Activated T-helper 2 cell treated with anti-CD3 and anti-CD28 coated beads, Interferon-gamma antibody, Interleukin-2, Interleukin-4, amounts not matched to agents 10 μg/mL and 5 μg/mL and 100 μg/mL, durations not matched to agents 14 hours and 24 hours and 36 hours (primary cell): ENCODE measurements at regions of chr19 and their contacts with region 1.

Region 1: DNA sequence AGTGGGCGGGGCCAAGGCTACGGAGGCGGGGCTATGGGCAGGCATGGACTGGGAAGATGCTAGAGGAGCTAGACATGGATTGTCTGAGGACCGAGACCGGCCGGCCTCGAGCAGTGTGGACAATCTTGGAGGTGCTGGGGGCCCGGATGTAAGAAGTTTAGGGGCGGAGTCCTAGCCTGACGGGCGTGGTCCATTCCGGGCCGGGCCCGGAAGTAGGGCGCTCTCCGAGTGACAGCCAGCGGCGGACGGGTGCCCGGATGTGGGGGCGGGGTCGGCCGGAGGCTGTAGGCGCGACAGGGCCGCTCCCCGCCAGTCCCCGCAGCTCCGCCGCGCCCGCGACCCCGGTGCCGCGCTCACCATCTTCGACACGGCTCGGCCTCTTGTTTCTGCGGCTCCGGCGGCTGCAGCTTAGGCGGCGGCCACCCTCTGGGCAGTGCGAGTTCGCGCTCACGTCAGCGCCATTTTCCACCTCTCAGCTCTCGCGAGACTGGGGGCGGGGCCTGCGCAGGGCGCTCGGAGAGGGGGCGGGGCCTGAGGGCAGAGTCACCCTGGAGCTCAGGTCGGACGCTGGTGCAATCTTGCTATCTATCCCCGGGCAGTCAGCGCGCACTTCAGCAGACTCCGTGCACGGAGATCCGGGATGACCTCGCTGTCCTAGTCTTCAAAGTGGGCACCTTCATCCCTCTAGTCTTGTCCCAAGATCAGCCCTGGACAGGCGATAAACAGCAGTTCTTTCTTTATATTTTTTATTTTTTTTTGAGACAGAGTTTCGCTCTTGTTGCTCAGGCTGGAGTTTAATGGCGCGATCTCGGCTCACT is at the start of gene ZNF414:
- DNase-seq: peak; percentile 94
- H3K4me3 Mint-ChIP-seq: peak within 1 kb of the TSS; percentile 93
- H3K27ac Mint-ChIP-seq: peak within 1 kb of the TSS; percentile 99
- H3K4me1 Mint-ChIP-seq: peaks cover 39% of the 10 kb centered on the region
- H3K27me3 Mint-ChIP-seq: no peaks in the 10 kb centered on the region
- total RNA-seq, gene ZNF414: 22.5 and 23.6 TPM in 2 replicates

Region 2: DNA sequence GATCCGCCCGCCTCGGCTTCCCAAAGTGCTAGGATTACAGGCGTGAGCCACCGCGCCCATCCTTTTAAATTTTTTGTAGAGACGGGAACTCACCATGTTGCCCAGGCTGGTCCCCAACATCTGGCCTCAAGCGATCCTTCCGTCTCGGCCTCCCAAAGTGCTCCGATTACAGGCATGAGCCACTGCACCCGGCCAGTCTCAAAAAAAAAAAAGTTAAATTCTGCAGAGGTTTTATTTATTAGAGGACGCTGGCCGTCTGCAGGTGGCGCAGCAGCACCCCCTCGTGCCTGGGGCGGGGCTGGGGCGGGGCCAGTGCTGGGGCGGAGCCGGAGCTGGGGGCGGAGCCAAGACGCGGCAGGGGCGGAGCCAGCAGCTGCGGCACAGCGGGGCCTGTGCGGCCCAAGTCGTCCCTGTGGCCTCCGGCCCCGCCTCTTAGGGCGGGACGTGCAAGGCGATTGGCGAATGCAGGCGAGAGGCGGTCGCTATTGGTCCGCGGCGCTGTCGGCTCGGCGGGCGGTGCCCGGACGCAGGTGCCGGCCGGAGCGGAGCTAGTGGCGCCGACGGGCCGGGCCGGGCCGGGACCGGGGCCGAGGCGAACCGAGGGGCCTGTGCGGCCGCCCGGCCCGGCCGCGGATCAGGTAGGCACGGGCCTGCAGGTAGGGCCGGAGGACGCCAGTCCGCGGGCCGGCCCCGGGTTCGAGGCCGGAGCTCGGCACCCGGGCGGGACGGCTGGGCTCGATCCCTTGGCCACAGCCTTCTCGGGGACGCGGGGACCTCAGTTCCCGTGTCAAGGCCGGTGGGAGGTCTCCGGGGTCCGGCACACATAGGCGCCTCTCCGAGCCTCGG is 100.9 kb before region 1 on chr19 and contains the start of gene MARCHF2:
- intact Hi-C with region 1: loop called (anchors 10 kb)
- DNase-seq: peak; percentile 94
- H3K4me3 Mint-ChIP-seq: peak within 1 kb of the TSS; percentile 65
- H3K27ac Mint-ChIP-seq: no peak within 1 kb of the TSS
- H3K4me1 Mint-ChIP-seq: peaks cover 7% of the 10 kb centered on the region
- H3K27me3 Mint-ChIP-seq: no peaks in the 10 kb centered on the region
- total RNA-seq, gene MARCHF2: 10.2 and 13.0 TPM in 2 replicates

Region 3: GRCh38 chr19:8444645-8445487 is 69.0 kb before region 1 on chr19 and contains the start of gene HNRNPM:
- intact Hi-C with region 1: loop called (anchors 5 kb)
- DNase-seq: peak; percentile 100
- H3K4me3 Mint-ChIP-seq: peak within 1 kb of the TSS; percentile 98
- H3K27ac Mint-ChIP-seq: peak within 1 kb of the TSS; percentile 98
- H3K4me1 Mint-ChIP-seq: peaks cover 32% of the 10 kb centered on the region
- H3K27me3 Mint-ChIP-seq: no peaks in the 10 kb centered on the region
- total RNA-seq, gene HNRNPM: 336 and 347 TPM in 2 replicates

Region 4: DNA sequence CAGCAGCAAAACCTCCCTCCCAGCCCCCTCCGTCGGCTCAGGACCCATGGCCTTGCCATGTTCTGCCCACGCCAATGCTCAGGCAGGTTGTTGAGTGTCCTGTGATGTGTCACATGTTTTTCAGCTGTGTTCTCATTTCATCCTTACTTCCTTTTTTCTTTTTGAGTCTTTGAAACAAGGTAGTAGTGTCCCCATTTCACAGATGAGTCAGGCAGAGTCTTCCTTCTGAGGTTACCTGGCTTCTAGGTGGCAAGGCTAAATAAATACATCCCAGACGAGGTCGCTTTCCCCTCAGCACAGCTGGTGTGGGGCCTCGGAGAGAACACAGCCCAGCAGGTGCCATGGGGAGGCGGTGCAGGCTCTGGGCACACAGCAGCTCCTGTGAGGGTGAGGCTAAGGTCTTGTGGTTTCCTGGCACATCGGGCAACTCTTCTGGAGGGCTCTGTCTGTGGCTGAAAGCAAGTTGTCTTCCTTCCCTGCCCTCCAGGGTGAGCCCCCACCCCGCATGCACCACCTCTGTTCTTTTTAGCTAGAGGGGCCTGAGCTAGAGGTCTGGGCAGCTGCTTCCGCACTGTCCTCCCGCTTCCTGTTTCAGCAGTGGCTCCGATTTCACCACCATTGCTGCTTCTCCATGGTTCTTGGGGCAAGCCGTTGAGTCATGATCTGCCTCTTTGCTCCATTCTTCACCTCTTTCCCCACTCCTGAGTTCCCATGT is 26.6 kb before region 1 on chr19:
- intact Hi-C with region 1: loop called (anchors 1 kb)
- DNase-seq: peak; percentile 40
- H3K4me3 Mint-ChIP-seq: peak overlapping the region; percentile 17
- H3K27ac Mint-ChIP-seq: peak overlapping the region; percentile 90
- H3K4me1 Mint-ChIP-seq: peaks cover 24% of the 10 kb centered on the region
- H3K27me3 Mint-ChIP-seq: no peaks in the 10 kb centered on the region

Region 5: DNA sequence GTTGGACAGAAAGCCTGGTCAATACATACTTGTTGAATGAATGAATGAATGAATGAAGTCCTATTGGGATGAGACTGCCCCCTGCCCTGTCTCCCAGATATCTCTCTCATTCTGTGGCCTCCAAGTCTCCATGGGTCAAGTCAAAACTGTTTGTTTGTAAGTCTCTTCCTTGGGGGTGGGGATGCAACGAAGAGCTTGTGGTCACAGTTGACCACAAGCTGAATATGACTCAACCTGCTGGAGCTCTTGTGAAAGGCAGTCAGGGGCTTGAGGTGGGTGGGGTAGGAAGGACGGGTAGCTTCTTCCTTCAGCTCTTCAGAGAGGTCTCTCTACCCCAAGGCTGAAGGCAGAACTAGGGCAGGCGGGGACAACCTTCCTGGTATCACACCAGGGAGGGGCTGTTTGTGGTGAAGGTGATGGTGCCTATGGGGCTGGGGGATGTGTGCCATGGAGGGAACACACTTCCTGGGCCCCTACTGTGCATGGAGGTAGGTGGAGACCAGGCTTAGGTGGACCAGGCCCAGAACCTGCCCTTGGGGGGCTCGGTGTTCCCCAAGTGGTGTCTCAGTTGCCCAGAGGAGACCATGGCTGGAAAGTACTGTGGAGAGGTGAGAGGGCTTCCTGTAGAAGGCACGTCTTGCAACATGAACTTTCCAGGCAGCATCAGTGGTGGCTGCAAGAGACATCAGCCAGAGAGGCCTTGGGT is 55.3 kb after region 1 on chr19:
- intact Hi-C with region 1: loop called (anchors 2 kb)
- DNase-seq: peak; percentile 80
- H3K4me3 Mint-ChIP-seq: peak overlapping the region; percentile 69
- H3K27ac Mint-ChIP-seq: peak overlapping the region; percentile 95
- H3K4me1 Mint-ChIP-seq: peaks cover 53% of the 10 kb centered on the region
- H3K27me3 Mint-ChIP-seq: no peaks in the 10 kb centered on the region

Region 6: GRCh38 chr19:8811315-8812172 is 297.6 kb after region 1 on chr19:
- intact Hi-C with region 1: no loop called
- DNase-seq: no peak
- H3K4me3 Mint-ChIP-seq: no peak overlapping the region
- H3K27ac Mint-ChIP-seq: no peak overlapping the region
- H3K4me1 Mint-ChIP-seq: no peaks in the 10 kb centered on the region
- H3K27me3 Mint-ChIP-seq: no peaks in the 10 kb centered on the region